Naive thymus-derived CD4-positive, alpha-beta T cell (primary cell): ENCODE measurements at regions of chr3 and their contacts with region 1.

Region 1: DNA sequence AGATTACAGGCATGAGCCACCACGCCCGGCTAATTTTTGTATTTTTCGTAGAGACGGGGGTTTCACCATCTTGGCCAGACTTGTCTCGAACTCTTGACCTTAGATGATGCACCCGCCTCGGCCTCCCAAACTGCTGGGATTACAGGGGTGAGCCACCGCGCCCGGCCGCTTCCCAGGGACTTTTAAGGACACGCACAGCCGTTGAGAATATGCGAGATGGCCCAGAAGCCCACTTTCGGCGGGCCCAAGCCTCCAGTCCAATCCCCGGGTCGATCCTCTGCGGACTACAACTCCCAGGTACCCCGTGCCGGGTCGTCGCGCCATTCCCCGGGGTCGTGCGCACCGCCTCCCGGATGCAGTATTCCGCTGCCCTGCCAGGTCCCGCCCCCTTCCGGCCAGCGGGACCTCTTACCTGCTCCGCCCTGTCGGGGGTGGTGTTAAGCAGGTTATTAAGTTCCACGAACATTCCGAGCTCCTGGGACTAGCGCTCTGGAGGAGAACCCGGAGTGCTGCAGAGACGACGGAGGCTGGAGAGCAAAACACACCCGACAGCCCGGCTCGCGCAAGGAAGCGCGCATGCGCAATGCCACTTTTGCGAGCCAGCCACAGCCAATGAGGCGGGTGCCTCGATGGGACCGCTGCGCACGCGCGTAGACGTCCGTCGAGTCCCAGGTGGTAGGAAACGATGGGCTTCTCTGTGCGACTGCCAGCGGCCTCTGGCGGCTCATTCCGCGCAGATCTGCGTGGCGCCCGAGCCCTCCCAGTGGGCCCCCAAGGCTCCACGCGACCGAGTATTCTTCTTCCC is at the start of gene ELP6:
- DNase-seq: peak; percentile 95 to 100 (median 99)
- ATAC-seq: peak; percentile 98
- H3K4me3 ChIP-seq: peak within 1 kb of the TSS; percentile 99
- H3K4me3 Mint-ChIP-seq: peak within 1 kb of the TSS; percentile 92 to 99 (median 97)
- H3K27ac ChIP-seq: peak within 1 kb of the TSS; percentile 95
- H3K27ac Mint-ChIP-seq: peak within 1 kb of the TSS; percentile 96 to 99 (median 98)
- H3K4me1 ChIP-seq: peaks cover 0 to 11% of the 10 kb centered on the region in 2 donors
- H3K4me1 Mint-ChIP-seq: peaks cover 6 to 31% (median 25%) of the 10 kb centered on the region in 7 donors
- H3K27me3 ChIP-seq: no peaks in the 10 kb centered on the region
- H3K27me3 Mint-ChIP-seq: peaks cover 0 to 8% (median 0%) of the 10 kb centered on the region in 5 donors
- total RNA-seq, gene ELP6: 18.8 to 43.1 (median 25.3) TPM

Region 2: DNA sequence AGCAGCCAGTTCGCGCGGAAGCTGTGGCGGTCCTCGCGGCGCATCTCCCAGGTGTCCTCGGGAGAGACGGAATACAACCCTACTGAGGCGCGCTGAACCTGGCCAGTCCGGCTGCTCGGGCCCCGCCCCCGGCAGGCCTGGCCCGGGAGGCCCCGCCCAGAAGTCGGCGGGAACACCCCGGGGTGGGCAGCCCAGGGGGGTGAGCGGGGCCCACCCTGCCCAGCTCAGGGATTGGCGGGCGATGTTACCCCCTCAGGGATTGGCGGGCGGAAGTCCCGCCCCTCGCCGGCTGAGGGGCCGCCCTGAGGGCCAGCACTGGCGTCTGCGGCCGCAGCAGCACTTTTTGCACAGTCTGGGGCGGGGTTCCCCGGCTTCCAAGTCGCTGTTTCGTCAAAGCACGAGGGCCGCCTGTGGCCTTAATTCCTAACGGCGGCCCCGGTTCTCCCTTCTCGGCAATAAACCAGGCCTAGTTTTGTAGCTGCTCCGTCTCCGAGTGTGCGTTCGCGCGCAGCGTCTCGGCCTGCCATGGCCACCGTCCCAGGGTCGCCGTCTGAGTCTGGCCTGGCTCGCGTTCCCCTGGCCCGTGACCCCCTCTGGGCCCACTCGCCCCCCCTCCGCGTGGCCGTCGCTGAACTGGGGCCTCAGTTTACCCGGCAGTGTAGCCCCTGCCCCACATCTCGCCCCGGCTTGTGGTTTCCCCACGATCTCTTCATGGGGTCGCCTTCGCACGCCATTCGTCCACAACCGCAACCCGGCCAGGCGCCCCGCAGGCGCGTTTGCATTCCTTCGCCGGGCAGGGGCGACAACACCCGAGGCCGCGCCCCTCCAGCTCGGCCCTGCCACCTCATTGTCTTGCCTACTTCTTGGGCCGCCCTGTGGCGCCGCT is 503.9 kb before region 1 on chr3:
- CTCF ChIA-PET with region 1: no interaction called
- POLR2A ChIA-PET with region 1: no interaction called
- intact Hi-C with region 1: loop called in 1 of 2 experiments (anchors 1 kb)
- DNase-seq: peak; percentile 51 to 75 (median 68)
- ATAC-seq: peak; percentile 93
- H3K4me3 ChIP-seq: peak overlapping the region; percentile 46
- H3K4me3 Mint-ChIP-seq: peak overlapping the region in 9 of 10 donors; percentile 64 to 86 (median 77)
- H3K27ac ChIP-seq: peak overlapping the region; percentile 73
- H3K27ac Mint-ChIP-seq: peak overlapping the region in 6 of 9 donors; percentile 40 to 83 (median 76)
- H3K4me1 ChIP-seq: no peaks in the 10 kb centered on the region
- H3K4me1 Mint-ChIP-seq: peaks cover 5 to 23% (median 7%) of the 10 kb centered on the region in 7 donors
- H3K27me3 ChIP-seq: no peaks in the 10 kb centered on the region
- H3K27me3 Mint-ChIP-seq: no peaks in the 10 kb centered on the region

Region 3: GRCh38 chr3:47282424-47283192 is 230.7 kb before region 1 on chr3 and contains the starts of genes KIF9 and KLHL18:
- CTCF ChIA-PET with region 1: interaction called, 3 read pairs
- POLR2A ChIA-PET with region 1: no interaction called
- intact Hi-C with region 1: loop called in 1 of 2 experiments (anchors 1 kb)
- DNase-seq: peak; percentile 86 to 98 (median 97)
- ATAC-seq: peak; percentile 91
- H3K4me3 ChIP-seq: peak within 1 kb of the TSS; percentile 76
- H3K4me3 Mint-ChIP-seq: peak within 1 kb of the TSS; percentile 89 to 100 (median 98)
- H3K27ac ChIP-seq: peak within 1 kb of the TSS; percentile 93
- H3K27ac Mint-ChIP-seq: peak within 1 kb of the TSS; percentile 98 to 100 (median 99)
- H3K4me1 ChIP-seq: peaks cover 14 to 23% of the 10 kb centered on the region in 2 donors
- H3K4me1 Mint-ChIP-seq: peaks cover 29 to 56% (median 43%) of the 10 kb centered on the region in 7 donors
- H3K27me3 ChIP-seq: no peaks in the 10 kb centered on the region
- H3K27me3 Mint-ChIP-seq: no peaks in the 10 kb centered on the region
- total RNA-seq, gene KIF9: 2.7 to 15.0 (median 4.1) TPM
- total RNA-seq, gene KLHL18: 21.7 to 47.5 (median 24.5) TPM

Region 4: DNA sequence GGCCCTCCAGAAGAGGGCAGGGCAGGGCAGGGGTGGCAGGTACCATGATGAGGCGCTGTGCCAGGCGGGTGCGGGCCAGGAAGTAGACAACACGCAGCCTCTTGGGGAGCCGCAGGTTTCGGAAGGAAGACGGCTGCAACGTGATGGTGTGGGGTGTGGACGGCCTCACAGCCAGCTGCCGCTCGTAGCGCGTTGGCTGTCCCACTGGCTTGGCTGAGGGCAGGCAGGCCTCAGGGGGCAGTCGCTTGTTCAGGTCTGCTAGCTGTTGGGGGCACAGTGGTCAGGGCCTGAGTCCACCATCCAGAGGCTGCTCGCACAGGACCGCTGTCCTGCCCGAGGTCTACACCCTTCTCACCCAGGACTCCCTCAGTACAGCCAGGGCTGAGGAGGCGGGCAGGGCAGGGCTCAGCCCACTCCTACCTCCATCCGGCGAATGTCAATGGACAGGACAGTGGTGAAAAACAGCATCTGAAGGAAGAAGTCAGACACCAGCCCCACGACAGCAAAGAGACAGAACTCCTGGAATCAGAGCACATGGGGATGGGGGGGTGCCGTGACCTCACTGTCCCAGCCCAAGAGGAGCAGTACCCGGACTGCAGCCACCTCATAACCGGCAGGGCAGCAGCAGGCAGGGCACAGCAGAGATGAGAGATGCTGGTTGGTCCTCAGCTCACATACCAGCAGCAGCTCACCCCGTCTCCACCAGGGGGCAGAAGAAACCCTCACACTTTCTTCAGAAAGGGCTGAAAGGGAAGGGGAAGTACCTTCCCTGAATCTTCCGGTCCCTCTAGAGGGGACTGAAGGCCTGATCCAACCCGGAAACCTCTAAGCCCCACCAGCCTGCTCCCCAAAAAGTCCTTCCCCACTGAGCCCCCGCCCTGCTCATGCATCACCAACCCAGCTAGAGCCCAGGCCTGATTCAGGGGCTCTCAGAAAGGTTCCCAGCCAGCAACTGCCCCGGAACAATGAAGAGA is 92.5 kb before region 1 on chr3:
- CTCF ChIA-PET with region 1: interaction called, 6 read pairs
- POLR2A ChIA-PET with region 1: interaction called, 7 read pairs
- intact Hi-C with region 1: loop called (anchors 1 kb)
- DNase-seq: peak; percentile 66 to 90 (median 88)
- ATAC-seq: peak; percentile 98
- H3K4me3 ChIP-seq: peak overlapping the region; percentile 29
- H3K4me3 Mint-ChIP-seq: peak overlapping the region; percentile 56 to 86 (median 78)
- H3K27ac ChIP-seq: peak overlapping the region; percentile 79
- H3K27ac Mint-ChIP-seq: peak overlapping the region; percentile 90 to 100 (median 99)
- H3K4me1 ChIP-seq: peaks cover 8 to 15% of the 10 kb centered on the region in 2 donors
- H3K4me1 Mint-ChIP-seq: peaks cover 0 to 22% (median 10%) of the 10 kb centered on the region in 7 donors
- H3K27me3 ChIP-seq: no peaks in the 10 kb centered on the region
- H3K27me3 Mint-ChIP-seq: no peaks in the 10 kb centered on the region

Region 5: GRCh38 chr3:47578119-47578632 is 64.8 kb after region 1 on chr3:
- CTCF ChIA-PET with region 1: no interaction called
- POLR2A ChIA-PET with region 1: interaction called, 4 read pairs
- intact Hi-C with region 1: loop called in 1 of 2 experiments (anchors 1 kb)
- DNase-seq: peak in 8 of 9 donors; percentile 16 to 62 (median 28)
- ATAC-seq: peak; percentile 80
- H3K4me3 ChIP-seq: peak overlapping the region; percentile 41
- H3K4me3 Mint-ChIP-seq: peak overlapping the region in 9 of 10 donors; percentile 30 to 80 (median 67)
- H3K27ac ChIP-seq: no peak overlapping the region
- H3K27ac Mint-ChIP-seq: no peak overlapping the region
- H3K4me1 ChIP-seq: peaks cover 0 to 5% of the 10 kb centered on the region in 2 donors
- H3K4me1 Mint-ChIP-seq: peaks cover 0 to 9% (median 0%) of the 10 kb centered on the region in 7 donors
- H3K27me3 ChIP-seq: peaks cover 3 to 9% of the 10 kb centered on the region in 2 donors
- H3K27me3 Mint-ChIP-seq: peaks cover 13 to 57% (median 21%) of the 10 kb centered on the region in 5 donors

Region 6: GRCh38 chr3:47802734-47803477 is 289.6 kb after region 1 on chr3 and contains the start of gene DHX30:
- CTCF ChIA-PET with region 1: no interaction called
- POLR2A ChIA-PET with region 1: no interaction called
- intact Hi-C with region 1: loop called (anchors 1 kb)
- DNase-seq: peak; percentile 77 to 90 (median 82)
- ATAC-seq: peak; percentile 95
- H3K4me3 ChIP-seq: peak within 1 kb of the TSS; percentile 65
- H3K4me3 Mint-ChIP-seq: peak within 1 kb of the TSS; percentile 89 to 98 (median 95)
- H3K27ac ChIP-seq: peak within 1 kb of the TSS; percentile 92
- H3K27ac Mint-ChIP-seq: peak within 1 kb of the TSS; percentile 92 to 98 (median 95)
- H3K4me1 ChIP-seq: peaks cover 11 to 12% of the 10 kb centered on the region in 2 donors
- H3K4me1 Mint-ChIP-seq: peaks cover 6 to 25% (median 20%) of the 10 kb centered on the region in 7 donors
- H3K27me3 ChIP-seq: no peaks in the 10 kb centered on the region
- H3K27me3 Mint-ChIP-seq: no peaks in the 10 kb centered on the region
- total RNA-seq, gene DHX30: 64.1 to 103 (median 92.0) TPM

Region 7: GRCh38 chr3:47961815-47962618 is 448.7 kb after region 1 on chr3:
- CTCF ChIA-PET with region 1: no interaction called
- POLR2A ChIA-PET with region 1: no interaction called
- intact Hi-C with region 1: no loop called
- DNase-seq: peak in 8 of 9 donors; percentile 16 to 60 (median 42)
- ATAC-seq: peak; percentile 59
- H3K4me3 ChIP-seq: no peak overlapping the region
- H3K4me3 Mint-ChIP-seq: peak overlapping the region; percentile 26 to 79 (median 62)
- H3K27ac ChIP-seq: no peak overlapping the region
- H3K27ac Mint-ChIP-seq: peak overlapping the region; percentile 25 to 86 (median 74)
- H3K4me1 ChIP-seq: peaks cover 16 to 17% of the 10 kb centered on the region in 2 donors
- H3K4me1 Mint-ChIP-seq: peaks cover 17 to 41% (median 33%) of the 10 kb centered on the region in 7 donors
- H3K27me3 ChIP-seq: no peaks in the 10 kb centered on the region
- H3K27me3 Mint-ChIP-seq: no peaks in the 10 kb centered on the region

Region 8: GRCh38 chr3:48188266-48189201 is 675.2 kb after region 1 on chr3 and contains the start of gene CDC25A:
- CTCF ChIA-PET with region 1: no interaction called
- POLR2A ChIA-PET with region 1: no interaction called
- intact Hi-C with region 1: loop called in 1 of 2 experiments (anchors 2 kb)
- DNase-seq: peak; percentile 69 to 94 (median 87)
- ATAC-seq: peak; percentile 100
- H3K4me3 ChIP-seq: peak within 1 kb of the TSS; percentile 88
- H3K4me3 Mint-ChIP-seq: peak within 1 kb of the TSS; percentile 89 to 96 (median 94)
- H3K27ac ChIP-seq: peak within 1 kb of the TSS; percentile 57
- H3K27ac Mint-ChIP-seq: peak within 1 kb of the TSS in 8 of 9 donors; percentile 8 to 84 (median 66)
- H3K4me1 ChIP-seq: peaks cover 4 to 6% of the 10 kb centered on the region in 2 donors
- H3K4me1 Mint-ChIP-seq: peaks cover 6 to 36% (median 13%) of the 10 kb centered on the region in 7 donors
- H3K27me3 ChIP-seq: no peaks in the 10 kb centered on the region
- H3K27me3 Mint-ChIP-seq: peaks cover 0 to 21% (median 14%) of the 10 kb centered on the region in 5 donors
- total RNA-seq, gene CDC25A: 0.61 to 20.7 TPM in 2 of 5 experiments, not detected in the others